HEK293 (cell line): ENCODE measurements at regions of chr11 and their contacts with region 1.

Region 1: DNA sequence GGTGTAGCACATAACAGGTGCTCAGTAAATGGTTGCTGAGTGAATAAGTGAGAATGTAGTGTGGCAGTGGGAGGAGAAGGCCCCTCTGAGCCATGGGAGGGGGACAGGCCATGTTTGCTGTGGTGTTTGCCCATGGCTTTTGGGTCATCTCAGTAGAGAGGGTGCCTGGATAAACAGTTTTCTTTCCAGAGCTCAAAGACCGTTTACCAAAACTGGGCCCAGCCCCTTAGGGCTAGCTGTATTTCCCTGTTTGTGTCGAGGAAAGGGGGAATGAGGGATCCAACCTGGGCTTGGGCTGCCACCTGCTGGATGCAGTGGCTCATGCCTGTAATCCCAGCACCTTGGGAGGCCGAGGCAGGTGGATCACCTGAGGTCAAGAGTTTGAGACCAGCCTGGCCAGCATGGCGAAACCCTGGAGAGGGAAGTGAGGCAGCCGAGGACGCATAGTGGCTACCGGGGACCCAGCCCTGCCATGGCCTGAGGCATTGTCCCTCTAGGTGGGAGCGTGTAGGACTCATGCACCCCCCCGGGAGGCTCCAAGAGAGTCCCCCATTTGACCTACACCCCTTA is 8.7 kb upstream of the LTO1 start:
- H3K4me3 ChIP-seq: no peak overlapping the region
- H3K27ac ChIP-seq: no peak overlapping the region
- H3K4me1 ChIP-seq: no peaks in the 10 kb centered on the region
- CTCF ChIP-seq: peak; percentile 55; the same call in 1 of the 2 replicates

Region 2: DNA sequence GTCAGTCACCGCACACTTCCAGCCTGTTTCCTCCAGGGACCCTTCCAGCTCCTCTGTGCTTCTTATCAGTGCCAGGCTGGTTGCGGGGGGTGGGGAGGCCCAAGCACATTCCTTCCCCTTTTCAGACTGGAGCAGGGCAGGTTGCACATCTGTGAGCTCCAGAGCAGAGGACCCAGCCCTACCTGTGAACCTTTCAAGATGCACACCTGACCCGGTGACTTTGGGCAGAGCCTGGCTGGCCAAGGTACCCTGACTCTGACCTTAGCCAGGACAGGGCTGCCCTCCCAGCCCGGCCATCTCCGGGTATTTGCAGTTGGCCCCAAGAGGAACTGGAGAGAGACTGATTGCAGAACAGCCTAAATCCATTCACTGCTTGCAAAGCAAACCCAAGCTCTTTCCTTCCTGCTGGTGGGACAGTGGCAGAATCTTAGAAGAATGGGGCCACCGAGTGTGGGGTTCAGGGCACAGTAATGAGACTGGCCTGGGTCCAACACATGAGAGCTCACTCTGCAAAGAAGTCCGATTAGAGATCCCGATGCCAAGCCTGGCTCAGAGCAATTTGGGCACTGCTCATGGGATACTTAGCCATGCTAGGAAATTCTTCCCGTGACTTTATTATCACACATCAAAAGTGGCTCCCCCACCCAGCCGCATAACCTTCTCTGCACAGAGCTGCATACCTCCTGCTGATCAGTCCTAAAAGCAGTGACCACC is 107.6 kb before region 1 on chr11:
- CTCF ChIA-PET with region 1: no interaction called
- POLR2A ChIA-PET with region 1: no interaction called
- H3K4me3 ChIP-seq: no peak overlapping the region
- H3K27ac ChIP-seq: no peak overlapping the region
- H3K4me1 ChIP-seq: no peaks in the 10 kb centered on the region
- CTCF ChIP-seq: no peak

Region 3: DNA sequence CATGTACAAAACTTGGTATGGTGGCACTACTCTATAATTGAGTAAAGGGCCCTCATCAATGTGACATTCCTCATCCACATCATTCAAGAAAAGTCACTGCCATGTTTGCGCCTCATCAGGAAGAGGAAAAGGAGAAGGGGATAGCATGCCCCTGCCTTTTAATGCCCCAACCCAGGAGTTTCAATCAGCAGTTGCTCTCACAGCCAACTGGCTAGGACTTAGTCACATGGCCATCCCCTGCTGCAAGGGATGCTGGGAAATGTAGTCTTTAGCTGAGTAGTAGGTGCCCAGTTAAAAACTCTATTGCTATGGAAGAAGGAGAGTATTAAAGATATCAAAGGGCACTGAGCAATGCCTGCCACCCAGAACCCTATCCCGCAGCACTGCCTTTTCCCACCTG is 53.8 kb before region 1 on chr11:
- CTCF ChIA-PET with region 1: no interaction called
- POLR2A ChIA-PET with region 1: no interaction called
- H3K4me3 ChIP-seq: no peak overlapping the region
- H3K27ac ChIP-seq: no peak overlapping the region
- H3K4me1 ChIP-seq: no peaks in the 10 kb centered on the region
- CTCF ChIP-seq: no peak

Region 4: GRCh38 chr11:69670158-69670845 is 13.5 kb before region 1 on chr11:
- CTCF ChIA-PET with region 1: interaction called, 10 read pairs
- POLR2A ChIA-PET with region 1: interaction called, 4 read pairs
- H3K4me3 ChIP-seq: no peak overlapping the region
- H3K27ac ChIP-seq: no peak overlapping the region
- H3K4me1 ChIP-seq: peaks cover 4% of the 10 kb centered on the region; the same call in 1 of the 2 replicates
- CTCF ChIP-seq: peak; percentile 72; the same call in 1 of the 2 replicates